H1 (cell line): ENCODE measurements at regions of chr4 and their contacts with region 1.

Region 1: GRCh38 chr4:26330186-26330787 is 9.5 kb downstream of the RBPJ start:
- DNase-seq: no peak
- H3K4me3 ChIP-seq: peak overlapping the region in 1 of 4 experiments; percentile 38; a peak in 1 of 8 replicates
- H3K27ac ChIP-seq: peak overlapping the region; percentile 12; the same call in 1 of the 2 replicates
- H3K4me1 ChIP-seq: peaks cover 7 to 15% (median 14%) of the 10 kb centered on the region in 4 experiments; a peak in 6 of 7 replicates
- H3K27me3 ChIP-seq: no peaks in the 10 kb centered on the region
- CTCF ChIP-seq: peak in 2 of 3 experiments; percentile 52 to 65; a peak in 2 of 4 replicates
- EP300 ChIP-seq: no peak
- POLR2A ChIP-seq: no peak
- RAD21 ChIP-seq: peak; percentile 60 to 67

Region 2: GRCh38 chr4:25993395-25994185 is 336.7 kb before region 1 on chr4:
- CTCF ChIA-PET with region 1: interaction called, 14 read pairs
- POLR2A ChIA-PET with region 1: no interaction called
- DNase-seq: peak; percentile 93 to 97
- H3K4me3 ChIP-seq: peak overlapping the region in 2 of 4 experiments; percentile 1 to 45; a peak in 3 of 8 replicates
- H3K27ac ChIP-seq: peak overlapping the region; percentile 46; the same call in 1 of the 2 replicates
- H3K4me1 ChIP-seq: peaks cover 0 to 5% (median 3%) of the 10 kb centered on the region in 4 experiments; a peak in 3 of 7 replicates
- H3K27me3 ChIP-seq: no peaks in the 10 kb centered on the region
- CTCF ChIP-seq: peak; percentile 70 to 83 (median 78)
- EP300 ChIP-seq: peak in 1 of 2 experiments; percentile 22; a peak in 1 of 3 replicates
- POLR2A ChIP-seq: peak in 1 of 2 experiments; percentile 10; a peak in 1 of 3 replicates
- RAD21 ChIP-seq: peak; percentile 61 to 70

Region 3: DNA sequence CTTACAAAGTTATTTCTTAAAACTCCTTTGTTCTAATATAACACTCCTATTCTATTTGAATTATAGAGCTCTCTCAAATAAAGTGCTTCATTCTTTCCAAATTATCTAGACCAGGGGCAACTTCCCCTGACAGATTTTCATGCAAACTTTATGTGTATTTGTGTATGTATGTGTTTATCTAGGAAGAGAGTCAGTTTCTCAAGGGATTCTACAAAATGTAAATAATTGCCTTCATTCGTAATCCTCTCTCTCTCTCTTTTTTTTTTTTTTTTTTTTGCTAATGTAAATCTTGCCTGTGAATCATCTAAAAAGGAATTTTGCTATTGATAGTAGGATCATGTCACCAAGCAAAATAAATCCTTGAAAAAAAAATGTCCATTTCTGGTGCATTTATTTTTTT is 48.4 kb before region 1 on chr4:
- CTCF ChIA-PET with region 1: interaction called, 16 read pairs
- POLR2A ChIA-PET with region 1: interaction called, 4 read pairs
- DNase-seq: no peak
- H3K4me3 ChIP-seq: no peak overlapping the region
- H3K27ac ChIP-seq: no peak overlapping the region
- H3K4me1 ChIP-seq: peaks cover 0 to 4% (median 0%) of the 10 kb centered on the region in 4 experiments; a peak in 2 of 7 replicates
- H3K27me3 ChIP-seq: no peaks in the 10 kb centered on the region
- CTCF ChIP-seq: no peak
- EP300 ChIP-seq: no peak
- POLR2A ChIP-seq: no peak
- RAD21 ChIP-seq: no peak

Region 4: GRCh38 chr4:26349496-26349895 is 19.2 kb after region 1 on chr4:
- CTCF ChIA-PET with region 1: interaction called, 39 read pairs
- POLR2A ChIA-PET with region 1: interaction called, 5 read pairs
- DNase-seq: no peak
- H3K4me3 ChIP-seq: no peak overlapping the region
- H3K27ac ChIP-seq: no peak overlapping the region
- H3K4me1 ChIP-seq: peaks cover 0 to 11% (median 8%) of the 10 kb centered on the region in 4 experiments; a peak in 5 of 7 replicates
- H3K27me3 ChIP-seq: no peaks in the 10 kb centered on the region
- CTCF ChIP-seq: no peak
- EP300 ChIP-seq: no peak
- POLR2A ChIP-seq: no peak
- RAD21 ChIP-seq: no peak

Region 5: GRCh38 chr4:26362745-26363439 is 32.6 kb after region 1 on chr4:
- CTCF ChIA-PET with region 1: interaction called, 18 read pairs
- POLR2A ChIA-PET with region 1: no interaction called
- DNase-seq: no peak
- H3K4me3 ChIP-seq: no peak overlapping the region
- H3K27ac ChIP-seq: no peak overlapping the region
- H3K4me1 ChIP-seq: peaks cover 0 to 9% (median 4%) of the 10 kb centered on the region in 4 experiments; a peak in 3 of 7 replicates
- H3K27me3 ChIP-seq: no peaks in the 10 kb centered on the region
- CTCF ChIP-seq: no peak
- EP300 ChIP-seq: no peak
- POLR2A ChIP-seq: no peak
- RAD21 ChIP-seq: no peak

Region 6: GRCh38 chr4:26388671-26389070 is 58.4 kb after region 1 on chr4:
- CTCF ChIA-PET with region 1: interaction called, 19 read pairs
- POLR2A ChIA-PET with region 1: interaction called, 3 read pairs
- DNase-seq: no peak
- H3K4me3 ChIP-seq: no peak overlapping the region
- H3K27ac ChIP-seq: no peak overlapping the region
- H3K4me1 ChIP-seq: peaks cover 0 to 3% (median under 1%) of the 10 kb centered on the region in 4 experiments; a peak in 1 of 7 replicates
- H3K27me3 ChIP-seq: no peaks in the 10 kb centered on the region
- CTCF ChIP-seq: no peak
- EP300 ChIP-seq: no peak
- POLR2A ChIP-seq: no peak
- RAD21 ChIP-seq: no peak

Region 7: GRCh38 chr4:26410385-26411293 is 80.4 kb after region 1 on chr4:
- CTCF ChIA-PET with region 1: interaction called, 66 read pairs
- POLR2A ChIA-PET with region 1: no interaction called
- DNase-seq: no peak
- H3K4me3 ChIP-seq: no peak overlapping the region
- H3K27ac ChIP-seq: no peak overlapping the region
- H3K4me1 ChIP-seq: peaks cover 0 to 8% (median 3%) of the 10 kb centered on the region in 4 experiments; a peak in 4 of 7 replicates
- H3K27me3 ChIP-seq: no peaks in the 10 kb centered on the region
- CTCF ChIP-seq: peak in 2 of 3 experiments; percentile 35 to 55; a peak in 2 of 4 replicates
- EP300 ChIP-seq: no peak
- POLR2A ChIP-seq: no peak
- RAD21 ChIP-seq: peak; percentile 70 to 71